ENCODE measurements at regions of chr10 and their contacts with region 1.

Region 1: DNA sequence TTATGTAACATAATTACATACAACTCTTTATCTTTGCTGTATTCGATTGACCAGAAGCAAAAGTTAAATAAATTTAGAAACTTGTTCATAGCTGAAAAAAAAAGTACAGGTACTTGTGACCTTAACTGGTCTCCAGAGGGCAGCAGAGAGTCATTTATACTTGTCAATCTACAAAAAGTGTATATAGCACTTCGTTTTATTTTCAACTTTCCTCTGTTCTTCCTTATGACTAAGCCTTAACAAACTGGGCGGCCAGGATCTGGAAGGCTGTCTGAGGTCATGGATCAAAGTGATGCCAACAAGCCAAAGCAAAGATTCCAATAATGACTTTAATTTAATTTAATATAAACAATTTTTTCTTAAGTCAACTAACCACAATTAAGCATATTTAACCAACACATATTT is 29.8 kb downstream of the C10orf67 start:
- DNase-seq: peak; percentile 60
- H3K4me3 ChIP-seq: no peak overlapping the region
- H3K27ac ChIP-seq: no peak overlapping the region
- H3K4me1 ChIP-seq: no peaks in the 10 kb centered on the region
- H3K27me3 ChIP-seq: no peaks in the 10 kb centered on the region
- CTCF ChIP-seq: peak; percentile 16 to 79 (median 77)
- POLR2A ChIP-seq: no peak

Region 2: DNA sequence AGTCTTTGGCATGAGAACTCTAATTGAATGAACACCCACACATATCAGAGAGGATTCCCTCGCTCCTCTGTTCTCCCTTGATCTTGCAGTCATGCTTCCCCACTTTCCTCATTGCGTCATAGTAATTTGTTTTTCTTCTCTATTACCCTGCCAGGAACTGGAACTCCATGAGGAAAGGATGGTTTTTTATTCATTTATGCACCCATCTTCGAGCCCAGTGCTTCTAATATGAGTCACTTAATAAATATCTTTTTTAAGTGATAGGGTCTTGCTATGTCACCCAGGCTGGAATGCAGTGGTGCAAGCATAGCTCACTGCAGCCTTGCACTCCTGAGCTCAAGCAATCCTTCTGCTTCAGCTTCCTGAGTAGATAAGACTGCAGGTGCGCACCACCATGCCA is 207.5 kb after region 1 on chr10:
- intact Hi-C with region 1: loop called (anchors 5 kb)
- DNase-seq: no peak
- H3K4me3 ChIP-seq: no peak overlapping the region
- H3K27ac ChIP-seq: no peak overlapping the region
- H3K4me1 ChIP-seq: no peaks in the 10 kb centered on the region
- H3K27me3 ChIP-seq: no peaks in the 10 kb centered on the region
- CTCF ChIP-seq: no peak
- POLR2A ChIP-seq: no peak

Region 3: DNA sequence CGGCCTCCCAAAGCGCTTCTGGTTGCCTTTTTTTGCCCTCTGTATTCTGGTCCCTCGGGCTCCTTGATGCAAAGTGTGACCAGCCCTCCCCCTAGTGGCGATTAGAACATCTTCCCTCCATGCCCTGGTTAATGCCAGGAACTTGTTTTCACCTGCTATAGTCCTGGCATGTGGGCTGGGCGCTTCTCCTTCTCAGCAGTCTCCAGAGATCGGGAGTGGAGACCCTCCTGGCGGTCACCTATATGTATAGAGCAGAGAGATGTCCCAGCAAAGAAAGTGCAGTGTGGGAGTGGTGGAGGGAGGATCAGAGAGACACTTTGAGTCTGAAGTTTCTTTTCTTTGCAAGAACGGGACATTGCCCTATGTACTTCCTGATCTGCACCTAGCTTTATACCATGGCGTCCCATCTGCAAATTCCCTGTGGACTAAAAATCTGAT is 388.2 kb after region 1 on chr10:
- intact Hi-C with region 1: loop called (anchors 5 kb)
- DNase-seq: peak; percentile 74
- H3K4me3 ChIP-seq: peak overlapping the region; percentile 15 to 23
- H3K27ac ChIP-seq: peak overlapping the region; percentile 6 to 36
- H3K4me1 ChIP-seq: no peaks in the 10 kb centered on the region
- H3K27me3 ChIP-seq: no peaks in the 10 kb centered on the region
- CTCF ChIP-seq: peak; percentile 48 to 78 (median 69)
- POLR2A ChIP-seq: no peak

Region 4: GRCh38 chr10:23886355-23886754 is 571.5 kb after region 1 on chr10:
- intact Hi-C with region 1: no loop called
- DNase-seq: no peak
- H3K4me3 ChIP-seq: no peak overlapping the region
- H3K27ac ChIP-seq: no peak overlapping the region
- H3K4me1 ChIP-seq: no peaks in the 10 kb centered on the region
- H3K27me3 ChIP-seq: no peaks in the 10 kb centered on the region
- CTCF ChIP-seq: no peak
- POLR2A ChIP-seq: no peak